ENCODE measurements at regions of chr12 and their contacts with region 1.

Region 1: GRCh38 chr12:642633-643474 is 20.4 kb downstream of the NINJ2 start:
- DNase-seq: peak; percentile 84
- H3K4me3 ChIP-seq: peak overlapping the region; percentile 48 to 81 (median 74)
- H3K27ac ChIP-seq: peak overlapping the region; percentile 93 to 98 (median 95)
- H3K4me1 ChIP-seq: peaks cover 6 to 42% (median 29%) of the 10 kb centered on the region in 4 donors
- H3K27me3 ChIP-seq: no peaks in the 10 kb centered on the region
- CTCF ChIP-seq: peak; percentile 22 to 69 (median 36)
- EP300 ChIP-seq: no peak
- POLR2A ChIP-seq: peak; percentile 64

Region 2: DNA sequence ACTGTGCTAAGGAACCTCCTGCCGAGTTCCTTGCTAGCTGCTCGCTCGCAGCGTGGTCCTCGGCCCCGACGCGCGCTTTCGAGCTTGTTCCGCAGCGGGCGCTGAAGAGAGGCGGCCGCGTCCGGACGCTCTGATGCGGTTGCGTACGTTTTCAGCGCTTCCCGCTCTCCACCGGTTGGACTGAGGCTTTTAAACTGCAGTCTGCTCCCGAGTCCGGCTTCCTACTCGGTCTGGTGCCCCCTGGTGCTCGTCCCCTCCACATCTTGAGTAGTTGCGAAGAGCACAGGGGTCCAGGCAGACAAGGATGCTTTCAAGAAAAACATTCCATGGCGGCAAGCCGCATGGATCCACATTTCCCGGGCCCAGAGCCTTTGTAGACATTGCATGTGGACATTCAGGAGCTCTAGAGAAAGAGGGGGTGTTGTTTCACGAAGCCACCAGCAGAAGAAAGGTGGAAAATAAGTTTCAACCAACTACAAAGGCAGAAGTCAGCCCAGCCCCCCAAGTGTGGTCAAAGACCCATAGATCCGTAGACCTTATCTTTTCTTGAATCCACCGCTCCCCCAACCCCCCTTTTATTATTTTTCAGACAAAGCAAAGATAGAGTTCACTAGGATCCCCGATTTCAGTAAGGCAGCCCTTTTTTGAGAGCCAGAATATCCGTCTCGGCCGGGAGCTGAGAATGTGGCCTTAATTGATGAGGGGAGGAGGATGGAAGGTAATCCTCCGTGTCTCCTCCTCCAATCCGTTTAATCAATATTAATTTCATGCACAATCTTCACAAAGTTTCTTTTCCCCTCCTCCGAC is 108.5 kb after region 1 on chr12:
- in situ Hi-C with region 1: no loop called
- intact Hi-C with region 1: loop called (anchors 5 kb)
- DNase-seq: peak; percentile 93
- H3K4me3 ChIP-seq: peak overlapping the region; percentile 3 to 100 (median 98)
- H3K27ac ChIP-seq: peak overlapping the region; percentile 97 to 100 (median 100)
- H3K4me1 ChIP-seq: peaks cover 6 to 42% (median 24%) of the 10 kb centered on the region in 4 donors
- H3K27me3 ChIP-seq: no peaks in the 10 kb centered on the region
- CTCF ChIP-seq: peak; percentile 55 to 82 (median 63)
- EP300 ChIP-seq: no peak
- POLR2A ChIP-seq: peak; percentile 34

Region 3: DNA sequence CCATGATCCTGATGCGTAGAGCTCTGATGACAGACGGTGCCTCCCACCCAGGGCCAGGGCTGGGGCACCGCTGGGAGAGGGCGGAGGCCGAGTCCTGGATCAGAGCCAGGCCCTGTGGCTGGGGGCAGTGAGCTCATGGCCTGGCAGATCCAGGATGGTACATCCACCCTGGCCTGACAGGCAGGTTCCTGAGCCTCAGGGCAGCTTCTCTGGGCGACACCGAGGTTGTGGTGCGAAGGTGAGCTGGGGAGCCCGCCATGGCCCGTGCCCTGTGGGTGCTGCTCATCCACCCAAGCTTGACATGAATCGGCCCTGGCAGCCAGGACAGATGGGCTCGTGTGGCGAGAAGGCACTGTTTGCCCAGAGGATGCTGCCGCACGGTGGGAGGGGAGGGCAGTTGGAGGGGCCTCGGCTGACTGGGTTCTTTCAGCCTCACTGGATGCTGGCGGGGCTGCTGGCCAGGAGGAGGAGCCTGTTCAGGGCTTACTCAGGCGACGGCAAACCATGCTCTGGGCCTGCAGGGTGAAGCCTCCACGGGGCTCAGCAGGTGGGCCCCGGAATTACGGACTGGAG is 1194.1 kb after region 1 on chr12:
- in situ Hi-C with region 1: no loop called
- intact Hi-C with region 1: no loop called
- DNase-seq: no peak
- H3K4me3 ChIP-seq: no peak overlapping the region
- H3K27ac ChIP-seq: no peak overlapping the region
- H3K4me1 ChIP-seq: no peaks in the 10 kb centered on the region
- H3K27me3 ChIP-seq: peaks cover 9% of the 10 kb centered on the region
- CTCF ChIP-seq: no peak
- EP300 ChIP-seq: no peak
- POLR2A ChIP-seq: no peak

Measured in transverse colon (tissue), 4 donors.